Cardiac septum (tissue), 1 donor: ENCODE measurements at regions of chrX and their contacts with region 1.

Region 1: DNA sequence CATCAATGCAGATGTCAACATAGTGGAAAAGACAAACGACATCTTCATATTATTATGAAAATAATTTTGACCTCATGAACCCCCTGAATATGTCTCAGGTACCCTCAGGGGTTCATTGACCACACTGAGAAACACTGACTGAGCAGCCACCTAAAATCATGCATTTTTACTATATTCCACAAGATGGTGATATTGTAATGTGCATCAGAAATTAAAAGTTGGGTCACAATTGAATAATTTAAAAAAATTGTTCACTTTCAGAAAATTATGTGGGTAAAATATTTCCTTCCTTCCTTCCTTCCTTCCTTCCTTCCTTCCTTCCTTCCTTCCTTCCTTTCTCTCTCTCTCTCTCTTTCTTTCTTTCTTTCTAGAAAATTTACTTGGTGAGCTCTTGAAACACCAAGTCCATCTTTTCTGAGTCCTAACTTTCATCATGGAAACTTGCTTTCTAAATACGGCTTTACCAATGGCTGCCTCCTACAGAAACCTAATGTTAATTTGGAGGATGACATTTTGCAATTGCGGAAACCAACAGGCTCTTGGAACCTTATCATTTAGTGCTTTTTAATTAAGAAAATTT is 103.6 kb downstream of the RTL3 start:
- DNase-seq: no peak

Region 2: GRCh38 chrX:78624962-78625909 is 69.7 kb after region 1 on chrX:
- intact Hi-C with region 1: no loop called
- DNase-seq: no peak

Region 3: GRCh38 chrX:78822157-78822690 is 266.7 kb after region 1 on chrX:
- intact Hi-C with region 1: no loop called
- DNase-seq: no peak

Region 4: GRCh38 chrX:78886550-78886949 is 331.1 kb after region 1 on chrX:
- intact Hi-C with region 1: loop called (anchors 10 kb)
- DNase-seq: no peak

Region 5: GRCh38 chrX:79081895-79082512 is 526.5 kb after region 1 on chrX:
- intact Hi-C with region 1: loop called (anchors 2 kb)
- DNase-seq: no peak

Region 6: GRCh38 chrX:79270401-79270800 is 714.9 kb after region 1 on chrX:
- intact Hi-C with region 1: loop called (anchors 10 kb)
- DNase-seq: peak; percentile 74

Region 7: DNA sequence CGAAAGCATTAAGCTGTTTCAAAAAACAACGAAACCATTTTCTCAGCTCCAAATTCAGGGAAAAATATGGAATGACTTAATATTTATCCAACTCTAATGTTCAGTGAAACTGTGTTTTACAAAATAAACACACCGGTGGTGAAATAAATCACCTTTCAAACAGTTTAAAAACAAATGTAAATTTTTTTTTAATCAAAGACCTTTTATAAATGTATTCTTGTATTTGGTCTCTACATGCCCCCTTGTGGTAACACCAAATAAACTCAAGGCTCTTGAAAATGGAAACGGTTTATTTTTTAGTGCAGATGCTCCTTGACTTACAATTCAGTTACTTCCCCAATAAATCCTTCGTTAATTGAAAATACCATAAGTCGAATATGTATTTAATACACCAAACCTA is 857.5 kb after region 1 on chrX:
- intact Hi-C with region 1: loop called (anchors 10 kb)
- DNase-seq: no peak